Motor neuron (in vitro differentiated cells): ENCODE measurements at regions of chrX and their contacts with region 1.

Region 1: GRCh38 chrX:8743126-8743732 is 11.3 kb upstream of the ANOS1 start:
- ATAC-seq: no peak
- H3K4me3 ChIP-seq: no peak overlapping the region
- H3K27ac ChIP-seq: no peak overlapping the region
- H3K4me1 ChIP-seq: no peaks in the 10 kb centered on the region

Region 2: DNA sequence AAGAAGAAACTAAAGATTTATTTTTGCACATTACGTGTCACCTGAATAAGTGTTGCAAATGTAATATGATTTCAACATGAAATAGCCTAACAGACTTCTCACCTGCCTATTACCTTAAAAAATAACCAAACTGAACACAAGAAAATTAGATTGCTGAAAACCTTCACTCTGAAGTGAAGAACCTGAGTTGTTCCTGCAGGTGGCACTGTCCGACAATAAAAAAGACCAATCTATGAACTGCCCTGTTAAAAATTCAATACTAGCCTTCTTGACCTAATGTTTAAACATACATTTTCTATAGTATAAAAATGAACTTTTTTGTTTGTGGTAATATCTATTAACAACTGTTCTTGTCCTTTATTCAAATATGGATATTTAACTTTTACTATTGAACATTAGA is 746.8 kb before region 1 on chrX:
- in situ Hi-C with region 1: loop called in 3 of 9 experiments (anchors 25 kb)
- ATAC-seq: peak in 1 of 8 experiments; percentile 43
- H3K4me3 ChIP-seq: no peak overlapping the region
- H3K27ac ChIP-seq: no peak overlapping the region
- H3K4me1 ChIP-seq: no peaks in the 10 kb centered on the region

Region 3: DNA sequence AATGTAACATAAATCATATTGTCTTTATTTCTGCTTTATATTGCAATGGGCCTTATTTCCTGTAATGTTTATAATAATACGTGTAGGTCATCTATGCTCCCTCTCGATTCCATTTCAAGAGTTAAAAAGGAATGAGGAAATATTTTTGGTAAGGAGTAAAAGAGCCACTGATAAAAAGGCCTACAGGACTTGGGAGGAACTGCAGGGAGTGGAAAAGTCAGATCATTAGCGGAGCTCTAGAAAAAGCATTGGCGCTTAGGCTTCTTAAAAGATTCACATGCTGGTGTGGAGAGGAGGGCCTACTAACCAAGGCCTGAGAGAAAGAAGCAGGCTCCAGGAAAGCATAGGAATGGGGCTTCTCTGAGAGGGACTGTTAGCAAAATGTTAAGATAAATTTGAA is 733.1 kb before region 1 on chrX:
- in situ Hi-C with region 1: loop called in 1 of 9 experiments (anchors 25 kb)
- ATAC-seq: no peak
- H3K4me3 ChIP-seq: no peak overlapping the region
- H3K27ac ChIP-seq: no peak overlapping the region
- H3K4me1 ChIP-seq: no peaks in the 10 kb centered on the region